Psoas muscle (tissue), 8 donors: ENCODE measurements at regions of chr7 and their contacts with region 1.

Region 1: GRCh38 chr7:152132812-152133211 is 107.3 kb downstream of the GALNT11 start:
- DNase-seq: no peak
- ATAC-seq: no peak
- H3K4me3 ChIP-seq: no peak overlapping the region
- H3K27ac ChIP-seq: no peak overlapping the region
- H3K4me1 ChIP-seq: no peaks in the 10 kb centered on the region
- H3K27me3 ChIP-seq: no peaks in the 10 kb centered on the region
- CTCF ChIP-seq: no peak

Region 2: GRCh38 chr7:152176797-152177196 is 44.0 kb after region 1 on chr7:
- intact Hi-C with region 1: loop called in 1 of 2 experiments (anchors 5 kb)
- DNase-seq: no peak
- ATAC-seq: no peak
- H3K4me3 ChIP-seq: no peak overlapping the region
- H3K27ac ChIP-seq: no peak overlapping the region
- H3K4me1 ChIP-seq: no peaks in the 10 kb centered on the region
- H3K27me3 ChIP-seq: no peaks in the 10 kb centered on the region
- CTCF ChIP-seq: no peak

Region 3: GRCh38 chr7:152231089-152231488 is 98.3 kb after region 1 on chr7:
- intact Hi-C with region 1: loop called in 1 of 2 experiments (anchors 5 kb)
- DNase-seq: no peak
- ATAC-seq: no peak
- H3K4me3 ChIP-seq: no peak overlapping the region
- H3K27ac ChIP-seq: no peak overlapping the region
- H3K4me1 ChIP-seq: no peaks in the 10 kb centered on the region
- H3K27me3 ChIP-seq: no peaks in the 10 kb centered on the region
- CTCF ChIP-seq: no peak